ENCODE measurements at regions of chr2 and their contacts with region 1.

Region 1: DNA sequence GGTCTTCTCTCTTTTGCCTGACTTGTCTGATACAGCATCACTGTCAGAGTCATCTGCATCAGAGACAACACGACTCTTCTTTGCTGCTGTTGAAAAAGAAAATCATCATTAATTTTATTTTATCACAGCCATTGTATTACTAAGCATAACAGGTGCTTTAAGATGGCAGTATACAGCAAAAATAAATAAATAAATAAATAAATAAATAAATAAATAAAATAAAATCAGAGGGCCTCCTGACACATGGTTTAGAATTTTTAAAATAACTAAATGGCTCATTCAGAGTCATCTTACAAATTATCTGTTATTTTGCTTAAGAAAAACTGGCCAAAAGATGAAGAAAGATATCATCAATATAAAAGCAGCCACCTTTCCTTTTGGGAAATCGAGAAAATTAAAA is 22.8 kb downstream of the IWS1 start:
- DNase-seq: no peak
- H3K4me3 ChIP-seq: no peak overlapping the region
- H3K27ac ChIP-seq: no peak overlapping the region
- H3K4me1 ChIP-seq: peaks cover 0 to 14% (median 7%) of the 10 kb centered on the region in 4 donors
- H3K27me3 ChIP-seq: no peaks in the 10 kb centered on the region
- CTCF ChIP-seq: no peak

Region 2: GRCh38 chr2:127573771-127574170 is 70.3 kb after region 1 on chr2:
- intact Hi-C with region 1: loop called (anchors 2 kb)
- DNase-seq: peak in 1 of 2 donors; percentile 41
- H3K4me3 ChIP-seq: no peak overlapping the region
- H3K27ac ChIP-seq: no peak overlapping the region
- H3K4me1 ChIP-seq: peaks cover 5 to 42% (median 40%) of the 10 kb centered on the region in 4 donors
- H3K27me3 ChIP-seq: no peaks in the 10 kb centered on the region
- CTCF ChIP-seq: no peak

Region 3: GRCh38 chr2:127721311-127721977 is 218.0 kb after region 1 on chr2:
- intact Hi-C with region 1: no loop called
- DNase-seq: no peak
- H3K4me3 ChIP-seq: no peak overlapping the region
- H3K27ac ChIP-seq: no peak overlapping the region
- H3K4me1 ChIP-seq: peaks cover 0 to 20% (median 0%) of the 10 kb centered on the region in 4 donors
- H3K27me3 ChIP-seq: no peaks in the 10 kb centered on the region
- CTCF ChIP-seq: no peak

Region 4: GRCh38 chr2:127796389-127796788 is 292.9 kb after region 1 on chr2:
- intact Hi-C with region 1: no loop called
- DNase-seq: no peak
- H3K4me3 ChIP-seq: no peak overlapping the region
- H3K27ac ChIP-seq: no peak overlapping the region
- H3K4me1 ChIP-seq: peaks cover 0 to 59% (median 8%) of the 10 kb centered on the region in 4 donors
- H3K27me3 ChIP-seq: no peaks in the 10 kb centered on the region
- CTCF ChIP-seq: no peak